Posterior vena cava (tissue), 2 donors: ENCODE measurements at regions of chr11 and their contacts with region 1.

Region 1: GRCh38 chr11:107202241-107202640 is 184.0 kb upstream of the GUCY1A2 start:
- DNase-seq: no peak

Region 2: DNA sequence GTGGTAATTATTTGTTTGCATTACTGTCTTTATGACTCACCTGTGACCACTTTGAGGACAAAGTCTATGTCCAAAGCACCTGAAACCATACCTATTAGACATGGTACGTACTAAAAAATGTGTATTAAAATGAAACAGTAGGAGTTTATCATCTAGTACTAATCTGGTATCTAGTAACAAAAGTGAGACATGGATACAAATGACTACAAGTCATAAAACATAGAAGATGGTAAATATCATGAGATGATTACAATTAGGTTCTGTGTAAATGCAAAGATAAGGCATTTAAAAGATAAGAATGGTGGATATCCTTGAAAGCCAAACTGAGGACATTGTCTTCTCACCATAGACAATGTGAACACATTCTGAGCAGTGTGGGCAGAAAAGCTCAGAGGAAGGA is 70.5 kb before region 1 on chr11:
- intact Hi-C with region 1: no loop called
- DNase-seq: no peak

Region 3: DNA sequence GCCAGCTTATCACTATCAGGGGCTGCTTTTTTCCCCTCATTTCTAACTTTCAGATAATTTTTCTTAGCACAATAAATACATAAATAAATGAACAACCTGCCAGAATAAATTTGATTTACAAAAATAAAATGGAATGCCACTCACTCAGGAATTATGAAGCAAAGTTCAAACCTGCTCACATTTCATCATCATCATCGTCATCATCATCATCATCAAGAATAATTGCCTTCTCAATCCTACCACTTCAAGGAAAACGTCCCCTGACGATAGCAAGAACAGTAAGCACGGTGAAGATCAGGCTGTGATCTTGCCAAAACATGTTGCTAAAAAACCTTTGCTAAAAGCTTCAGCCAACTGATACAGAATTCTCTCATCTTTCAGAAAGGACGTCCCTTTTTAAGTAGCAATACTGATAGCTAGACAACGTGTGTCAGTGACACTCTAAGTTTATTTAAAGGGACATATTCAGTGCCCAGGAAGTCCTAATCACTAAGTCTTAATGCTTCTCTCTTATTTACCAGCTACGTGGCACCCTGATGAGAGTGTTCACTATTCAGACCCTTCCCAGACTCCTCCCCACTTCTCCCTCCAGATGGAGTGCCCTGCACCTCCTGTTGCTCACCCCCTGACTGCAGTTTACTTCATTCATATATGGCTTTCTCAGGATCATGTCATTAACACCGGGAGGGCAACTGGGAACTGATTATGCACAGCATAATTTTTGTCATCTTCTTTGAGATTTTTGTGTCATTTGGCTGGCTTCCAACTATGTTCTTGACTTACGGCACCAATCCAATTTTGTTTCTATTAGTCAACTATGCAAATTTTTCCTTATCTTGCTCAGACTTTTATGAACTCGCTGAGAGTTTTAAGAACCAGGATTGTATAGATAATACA is 16.1 kb after region 1 on chr11:
- intact Hi-C with region 1: loop called in 1 of 2 experiments (anchors 1 kb)
- DNase-seq: no peak

Region 4: DNA sequence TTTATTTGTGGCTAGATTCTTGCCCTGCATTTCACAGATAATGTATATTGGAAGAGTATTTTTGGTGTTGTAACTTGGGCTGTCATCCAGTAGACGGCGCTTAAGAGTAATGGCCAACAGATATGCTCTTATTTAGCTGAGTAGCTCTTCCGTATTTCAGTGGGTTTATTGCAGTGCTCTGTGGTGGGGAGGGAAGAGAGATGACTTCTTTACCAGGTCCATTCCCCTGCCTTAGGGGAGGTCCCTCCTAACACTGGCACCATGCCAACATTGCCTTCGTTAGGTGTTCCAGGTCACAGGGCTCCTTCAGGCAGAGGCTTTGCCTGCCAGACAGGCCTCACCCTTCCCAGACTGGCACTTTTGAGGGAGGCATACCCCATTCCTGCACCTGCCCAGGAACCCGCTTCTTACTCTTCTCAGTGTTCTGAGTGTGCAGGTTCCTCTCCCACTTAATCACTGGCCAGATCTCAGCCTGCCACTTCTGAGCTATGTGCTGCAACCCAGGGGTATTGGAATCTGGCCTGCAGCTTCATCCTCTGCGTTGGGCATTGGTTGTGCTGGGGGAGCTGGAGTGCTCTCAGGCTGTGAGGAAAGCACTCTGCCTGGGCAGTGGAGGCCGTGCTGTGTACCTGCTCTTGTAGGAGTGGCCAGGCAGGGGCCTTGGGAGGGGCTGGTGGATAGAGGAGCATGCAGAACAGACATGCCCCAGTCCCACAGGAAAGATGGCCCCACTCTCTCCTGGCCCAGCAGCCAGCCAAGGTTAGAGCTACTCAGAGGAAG is 539.0 kb after region 1 on chr11:
- intact Hi-C with region 1: no loop called
- DNase-seq: no peak